ENCODE measurements at regions of chr1 and their contacts with region 1.

Region 1: DNA sequence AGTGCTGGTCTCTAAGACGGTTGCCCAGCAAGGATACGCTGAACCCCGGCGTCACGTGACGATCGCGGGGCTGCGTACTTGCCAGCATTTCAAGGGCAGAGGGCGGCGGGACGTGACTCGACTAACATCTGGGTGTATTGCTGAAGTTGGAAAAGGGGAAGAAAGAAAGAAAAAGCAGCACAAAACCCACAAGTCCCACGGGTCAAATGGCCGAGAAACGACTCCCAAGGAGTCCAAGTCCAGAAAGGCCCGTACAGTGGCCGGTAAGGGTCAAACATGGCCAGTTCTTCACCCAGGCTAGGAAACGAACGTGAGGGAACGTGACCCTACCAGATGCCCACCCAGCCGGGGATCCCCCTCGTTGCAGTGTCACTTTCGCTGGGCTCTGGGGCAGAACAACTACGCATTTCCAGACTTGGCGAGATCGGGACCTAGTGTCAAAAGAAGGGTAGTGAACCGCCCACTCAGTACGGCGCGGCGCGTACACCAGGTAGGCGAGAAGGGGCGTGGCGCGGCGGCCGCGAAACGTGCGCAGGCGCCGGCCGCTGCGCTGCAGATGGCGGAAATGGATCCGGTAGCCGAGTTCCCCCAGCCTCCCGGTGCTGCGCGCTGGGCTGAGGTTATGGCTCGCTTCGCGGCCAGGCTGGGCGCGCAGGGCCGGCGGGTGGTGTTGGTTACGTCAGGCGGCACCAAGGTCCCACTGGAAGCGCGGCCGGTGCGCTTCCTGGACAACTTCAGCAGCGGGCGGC is at the starts of genes PPCS and ZMYND12:
- DNase-seq: peak; percentile 91 to 96 (median 93)
- H3K4me3 ChIP-seq: peak within 1 kb of the TSS; percentile 84 to 96
- H3K4me3 Mint-ChIP-seq: peak within 1 kb of the TSS; percentile 91 to 100 (median 99)
- H3K27ac ChIP-seq: peak within 1 kb of the TSS; percentile 99
- H3K27ac Mint-ChIP-seq: peak within 1 kb of the TSS; percentile 92 to 100 (median 99)
- H3K4me1 ChIP-seq: peaks cover 29% of the 10 kb centered on the region
- H3K4me1 Mint-ChIP-seq: peaks cover 21 to 43% (median 33%) of the 10 kb centered on the region in 4 donors
- H3K27me3 ChIP-seq: no peaks in the 10 kb centered on the region
- H3K27me3 Mint-ChIP-seq: no peaks in the 10 kb centered on the region
- total RNA-seq, gene PPCS: 61.1 to 65.2 TPM
- total RNA-seq, gene ZMYND12: 0.58 to 1.3 TPM

Region 2: GRCh38 chr1:42319128-42319851 is 136.9 kb before region 1 on chr1:
- CTCF ChIA-PET with region 1: no interaction called
- POLR2A ChIA-PET with region 1: interaction called, 4 read pairs
- intact Hi-C with region 1: loop called (anchors 2 kb)
- DNase-seq: peak in 3 of 5 donors; percentile 5 to 59 (median 23)
- H3K4me3 ChIP-seq: peak overlapping the region in 1 of 2 donors; percentile 6
- H3K4me3 Mint-ChIP-seq: peak overlapping the region; percentile 73 to 92 (median 82)
- H3K27ac ChIP-seq: peak overlapping the region; percentile 51
- H3K27ac Mint-ChIP-seq: peak overlapping the region; percentile 85 to 94 (median 91)
- H3K4me1 ChIP-seq: peaks cover 92% of the 10 kb centered on the region
- H3K4me1 Mint-ChIP-seq: peaks cover 73 to 95% (median 88%) of the 10 kb centered on the region in 4 donors
- H3K27me3 ChIP-seq: no peaks in the 10 kb centered on the region
- H3K27me3 Mint-ChIP-seq: no peaks in the 10 kb centered on the region

Region 3: DNA sequence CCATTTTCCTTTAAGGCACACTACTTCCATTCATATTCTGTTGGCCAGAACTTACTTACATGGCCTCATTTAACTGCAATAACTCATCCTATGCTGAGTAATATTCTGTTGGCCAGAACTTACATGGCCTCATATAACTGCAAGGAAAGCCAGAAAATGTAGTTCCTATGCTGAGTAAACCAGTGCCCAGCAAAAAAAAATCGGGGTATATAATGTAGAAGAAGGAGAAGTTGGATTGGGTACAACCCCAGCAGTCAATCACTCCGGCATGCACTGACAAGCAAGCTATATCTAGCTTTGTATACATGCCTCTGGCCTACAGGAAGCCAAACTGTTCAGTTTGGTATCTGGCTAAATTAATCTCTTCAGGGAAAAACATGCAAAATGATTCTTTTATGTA is 162.7 kb after region 1 on chr1:
- CTCF ChIA-PET with region 1: no interaction called
- POLR2A ChIA-PET with region 1: no interaction called
- intact Hi-C with region 1: no loop called
- DNase-seq: no peak
- H3K4me3 ChIP-seq: no peak overlapping the region
- H3K4me3 Mint-ChIP-seq: no peak overlapping the region
- H3K27ac ChIP-seq: no peak overlapping the region
- H3K27ac Mint-ChIP-seq: no peak overlapping the region
- H3K4me1 ChIP-seq: no peaks in the 10 kb centered on the region
- H3K4me1 Mint-ChIP-seq: no peaks in the 10 kb centered on the region
- H3K27me3 ChIP-seq: no peaks in the 10 kb centered on the region
- H3K27me3 Mint-ChIP-seq: no peaks in the 10 kb centered on the region

Region 4: DNA sequence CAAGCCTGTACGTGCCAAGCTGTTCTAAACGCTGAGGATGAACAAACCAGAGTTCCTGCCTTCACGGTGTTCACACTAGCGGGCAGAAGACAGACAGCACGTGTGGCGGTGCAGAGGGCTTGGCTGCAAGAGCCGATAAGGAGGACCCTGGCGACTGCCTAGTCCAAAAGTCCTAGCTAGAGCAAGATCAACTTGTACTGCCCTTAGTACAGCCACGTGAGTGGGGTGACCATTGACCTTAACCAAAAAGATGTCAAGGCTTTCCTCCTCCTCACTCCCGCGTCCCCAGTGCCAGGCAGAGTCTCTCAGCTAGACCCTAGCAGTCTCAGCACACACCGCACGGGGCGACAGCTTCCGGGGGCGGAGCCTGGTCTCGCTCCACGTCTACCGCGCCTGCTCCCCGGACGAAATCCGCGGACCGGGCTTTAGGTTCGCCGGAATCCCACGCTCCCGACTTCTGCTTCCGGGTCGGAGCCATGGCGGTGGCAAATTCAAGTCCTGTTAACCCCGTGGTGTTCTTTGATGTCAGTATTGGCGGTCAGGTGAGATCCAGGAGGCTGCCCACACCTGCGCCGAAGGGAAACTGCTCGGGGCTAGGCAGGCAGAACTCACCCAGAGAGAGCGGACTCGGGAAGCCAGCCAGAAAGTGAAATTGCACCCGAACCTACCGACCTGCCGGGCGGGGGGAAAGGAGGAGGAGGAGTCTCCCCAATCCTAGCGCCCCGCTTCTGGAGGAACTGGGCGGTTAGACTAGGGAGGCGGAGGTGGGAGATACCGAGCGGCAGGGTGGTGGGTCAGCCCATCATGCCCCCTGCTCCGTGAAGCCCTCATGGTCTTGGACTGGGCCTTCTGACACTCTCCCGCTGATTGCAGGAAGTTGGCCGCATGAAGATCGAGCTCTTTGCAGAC is 202.0 kb after region 1 on chr1 and contains the start of gene PPIH:
- CTCF ChIA-PET with region 1: no interaction called
- POLR2A ChIA-PET with region 1: interaction called, 6 read pairs
- intact Hi-C with region 1: loop called (anchors 2 kb)
- DNase-seq: peak; percentile 92 to 96 (median 93)
- H3K4me3 ChIP-seq: peak within 1 kb of the TSS; percentile 81 to 89
- H3K4me3 Mint-ChIP-seq: peak within 1 kb of the TSS; percentile 94 to 100 (median 98)
- H3K27ac ChIP-seq: peak within 1 kb of the TSS; percentile 65
- H3K27ac Mint-ChIP-seq: peak within 1 kb of the TSS; percentile 94 to 98 (median 95)
- H3K4me1 ChIP-seq: peaks cover 26% of the 10 kb centered on the region
- H3K4me1 Mint-ChIP-seq: peaks cover 21 to 47% (median 35%) of the 10 kb centered on the region in 4 donors
- H3K27me3 ChIP-seq: no peaks in the 10 kb centered on the region
- H3K27me3 Mint-ChIP-seq: no peaks in the 10 kb centered on the region
- total RNA-seq, gene PPIH: 40.5 to 42.9 TPM

Region 5: DNA sequence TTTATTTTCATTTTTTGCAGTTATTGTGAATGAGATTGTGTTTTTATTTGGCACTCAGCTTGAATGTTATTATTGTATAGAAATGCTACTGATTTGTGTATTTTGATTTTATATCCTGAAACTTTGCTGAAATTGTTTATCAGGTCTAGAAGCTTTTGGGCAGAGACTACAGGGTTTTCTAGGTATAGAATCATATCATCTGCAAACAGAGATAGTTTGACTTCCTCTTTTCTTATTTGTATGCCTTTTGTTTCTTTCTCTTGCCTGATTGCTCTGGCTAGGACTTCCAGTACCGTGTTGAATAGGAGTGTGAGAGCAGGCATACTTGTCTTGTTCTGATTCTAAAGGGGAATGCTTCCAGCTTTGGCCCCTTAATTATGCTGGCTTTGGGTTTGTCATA is 417.5 kb after region 1 on chr1:
- CTCF ChIA-PET with region 1: no interaction called
- POLR2A ChIA-PET with region 1: no interaction called
- intact Hi-C with region 1: no loop called
- DNase-seq: no peak
- H3K4me3 ChIP-seq: no peak overlapping the region
- H3K4me3 Mint-ChIP-seq: no peak overlapping the region
- H3K27ac ChIP-seq: no peak overlapping the region
- H3K27ac Mint-ChIP-seq: peak overlapping the region in 1 of 7 donors; percentile 54
- H3K4me1 ChIP-seq: no peaks in the 10 kb centered on the region
- H3K4me1 Mint-ChIP-seq: peaks cover 0 to 2% (median 0%) of the 10 kb centered on the region in 4 donors
- H3K27me3 ChIP-seq: no peaks in the 10 kb centered on the region
- H3K27me3 Mint-ChIP-seq: peaks cover 4 to 7% of the 10 kb centered on the region in 2 donors